Left cardiac atrium (tissue), 4 donors: ENCODE measurements at regions of chr5 and their contacts with region 1.

Region 1: DNA sequence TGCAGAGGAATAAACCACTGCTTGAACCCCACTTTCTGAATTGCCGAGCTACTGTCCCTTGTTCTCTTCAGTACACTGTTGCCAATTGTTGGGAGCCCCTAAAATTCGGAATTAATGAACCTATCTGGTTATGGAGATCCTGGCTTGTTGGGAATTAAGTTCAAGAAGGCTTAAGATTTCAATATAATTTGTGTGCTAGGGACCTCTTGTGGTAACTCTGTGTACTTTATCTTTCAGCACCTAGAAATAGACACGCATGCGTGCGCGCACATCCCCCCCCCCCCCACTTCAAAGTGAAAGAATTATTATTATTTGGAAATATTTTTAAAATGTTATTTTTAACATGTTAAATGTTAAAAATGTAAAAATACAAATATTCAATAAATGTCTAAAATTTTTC is 53.3 kb upstream of the FAM169A start:
- DNase-seq: no peak
- ATAC-seq: peak; percentile 59 to 64

Region 2: DNA sequence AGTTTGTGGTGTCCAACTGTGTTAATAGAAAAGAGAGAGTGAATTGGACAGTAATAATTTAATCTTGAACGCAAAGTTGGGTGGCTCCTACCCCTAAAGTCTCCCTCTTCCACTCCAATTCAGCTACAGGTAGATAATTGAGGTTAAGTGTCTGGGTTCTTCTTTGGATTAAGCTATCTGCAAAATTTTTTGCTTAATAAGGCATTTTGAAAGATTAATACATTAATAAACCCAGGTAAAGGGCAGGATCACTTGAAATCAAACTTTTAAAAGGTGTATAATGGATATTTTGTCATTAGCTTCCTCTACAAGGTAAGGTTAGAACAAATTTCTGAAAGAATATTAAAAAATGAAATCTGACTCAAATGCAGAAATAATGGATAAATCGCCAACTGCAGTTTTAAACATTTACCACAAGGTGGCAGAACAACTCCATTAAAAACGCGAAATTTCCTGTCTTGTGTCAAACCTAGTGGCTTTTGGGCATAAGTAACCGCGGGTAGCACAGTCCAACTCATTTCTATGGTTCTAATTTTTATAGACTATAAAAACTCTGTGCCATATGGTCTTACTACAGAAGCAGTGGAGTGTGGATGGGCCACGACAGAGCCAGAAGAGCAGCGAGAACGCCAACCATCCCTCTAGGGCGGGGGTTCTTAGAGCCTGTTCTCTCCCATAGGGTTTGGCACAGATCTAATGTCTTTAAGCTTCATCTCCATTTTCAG is 1017.0 kb before region 1 on chr5:
- intact Hi-C with region 1: loop called in 1 of 2 experiments (anchors 10 kb)
- DNase-seq: no peak
- ATAC-seq: peak; percentile 48 to 60

Region 3: DNA sequence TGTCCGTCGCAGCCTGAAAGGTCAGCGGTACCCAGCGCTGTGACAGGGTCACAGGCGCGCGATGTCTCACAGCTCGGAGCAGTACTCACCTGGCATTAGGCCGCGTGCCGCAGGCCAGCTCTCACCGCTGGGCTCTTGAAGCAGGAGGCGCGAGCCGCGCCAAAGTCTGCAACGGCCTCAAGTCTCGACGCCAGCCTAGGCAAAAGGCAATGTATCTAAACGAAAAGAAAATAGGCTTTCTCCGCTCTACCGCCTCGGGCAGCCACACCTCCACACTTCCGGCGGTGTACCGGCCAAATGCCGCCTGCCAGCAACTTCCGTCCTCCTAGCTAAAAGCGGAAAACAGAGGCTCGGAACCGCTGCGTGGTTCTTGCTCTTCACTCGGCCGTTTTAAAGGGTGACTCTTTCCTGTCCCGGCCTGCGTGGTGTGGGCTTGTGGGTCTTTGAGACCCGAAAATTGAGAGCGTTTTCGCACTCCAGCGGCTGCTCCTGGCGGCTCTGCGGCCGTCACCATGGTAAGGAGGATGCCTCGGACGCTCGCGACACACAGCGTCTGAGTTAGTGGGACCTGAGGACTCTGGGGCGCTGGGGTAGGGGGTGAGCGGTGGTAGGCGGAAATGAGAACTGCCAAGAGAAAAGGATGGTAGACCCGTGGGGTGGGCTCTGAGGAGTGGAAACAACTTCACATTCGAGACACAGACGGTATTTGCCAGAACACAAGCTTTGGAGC is 152.5 kb before region 1 on chr5 and contains the starts of genes GFM2 and NSA2:
- intact Hi-C with region 1: loop called (anchors 2 to 10 kb)
- DNase-seq: peak; percentile 93
- ATAC-seq: peak; percentile 99
- total RNA-seq, gene GFM2: 24.8 to 27.8 TPM
- total RNA-seq, gene NSA2: 42.1 to 71.8 TPM

Region 4: GRCh38 chr5:74851684-74852353 is 67.7 kb before region 1 on chr5:
- intact Hi-C with region 1: no loop called
- DNase-seq: no peak
- ATAC-seq: peak in 1 of 2 donors; percentile 40